Activated B cell treated with CpG ODN at 0.5 μM for 24 hours (primary cell): ENCODE measurements at regions of chr19 and their contacts with region 1.

Region 1: DNA sequence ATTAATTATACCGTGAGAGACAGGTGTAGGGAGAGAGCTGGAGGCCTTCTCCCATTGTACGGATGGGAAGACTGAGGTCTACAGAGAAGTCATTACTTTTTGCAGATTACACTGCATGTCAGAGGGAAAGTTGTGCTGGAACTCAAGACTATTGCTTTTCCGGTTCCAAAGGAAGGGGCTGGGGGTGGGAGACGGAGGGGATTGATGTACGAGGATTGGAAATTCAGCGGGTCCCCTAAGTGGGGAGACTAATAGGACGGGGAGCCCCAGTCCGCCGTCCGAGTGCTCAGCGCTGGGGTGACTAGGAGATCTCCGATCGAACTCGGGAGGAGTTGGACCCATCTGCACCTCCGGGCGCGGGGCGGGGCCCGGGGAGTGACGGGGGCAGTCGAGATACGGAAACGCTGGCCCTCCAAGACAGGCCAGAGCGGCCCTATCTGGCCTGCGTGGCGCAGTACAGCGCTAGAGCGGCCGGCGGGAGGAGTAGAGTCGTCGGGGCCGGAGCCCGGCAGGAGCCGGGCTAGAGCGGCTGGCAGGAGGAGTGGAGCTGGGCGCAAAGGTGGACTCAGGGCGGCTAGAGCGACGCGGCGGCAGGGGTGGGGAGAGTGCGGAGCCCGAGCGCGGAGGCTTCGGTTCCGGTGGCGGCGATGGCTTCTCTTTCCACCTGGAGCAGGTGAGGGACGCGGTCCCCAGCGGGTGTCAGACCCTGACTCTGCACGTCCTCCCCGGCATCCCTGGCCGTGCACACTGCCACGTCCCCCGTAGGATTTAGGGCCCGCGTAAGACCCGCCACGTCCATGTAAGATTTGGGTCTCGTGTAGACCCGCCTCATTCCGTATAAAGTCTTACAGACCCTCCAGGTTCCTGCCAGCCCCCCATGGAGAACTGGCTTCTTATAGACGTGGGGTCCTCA is 1.1 kb downstream of the ARHGEF1 start:
- DNase-seq: peak; percentile 86
- ATAC-seq: peak; percentile 82
- H3K4me3 Mint-ChIP-seq: peak overlapping the region; percentile 96
- H3K27ac Mint-ChIP-seq: peak overlapping the region; percentile 97
- H3K4me1 Mint-ChIP-seq: peaks cover 78% of the 10 kb centered on the region
- H3K27me3 Mint-ChIP-seq: no peaks in the 10 kb centered on the region
- CTCF ChIP-seq: no peak

Region 2: DNA sequence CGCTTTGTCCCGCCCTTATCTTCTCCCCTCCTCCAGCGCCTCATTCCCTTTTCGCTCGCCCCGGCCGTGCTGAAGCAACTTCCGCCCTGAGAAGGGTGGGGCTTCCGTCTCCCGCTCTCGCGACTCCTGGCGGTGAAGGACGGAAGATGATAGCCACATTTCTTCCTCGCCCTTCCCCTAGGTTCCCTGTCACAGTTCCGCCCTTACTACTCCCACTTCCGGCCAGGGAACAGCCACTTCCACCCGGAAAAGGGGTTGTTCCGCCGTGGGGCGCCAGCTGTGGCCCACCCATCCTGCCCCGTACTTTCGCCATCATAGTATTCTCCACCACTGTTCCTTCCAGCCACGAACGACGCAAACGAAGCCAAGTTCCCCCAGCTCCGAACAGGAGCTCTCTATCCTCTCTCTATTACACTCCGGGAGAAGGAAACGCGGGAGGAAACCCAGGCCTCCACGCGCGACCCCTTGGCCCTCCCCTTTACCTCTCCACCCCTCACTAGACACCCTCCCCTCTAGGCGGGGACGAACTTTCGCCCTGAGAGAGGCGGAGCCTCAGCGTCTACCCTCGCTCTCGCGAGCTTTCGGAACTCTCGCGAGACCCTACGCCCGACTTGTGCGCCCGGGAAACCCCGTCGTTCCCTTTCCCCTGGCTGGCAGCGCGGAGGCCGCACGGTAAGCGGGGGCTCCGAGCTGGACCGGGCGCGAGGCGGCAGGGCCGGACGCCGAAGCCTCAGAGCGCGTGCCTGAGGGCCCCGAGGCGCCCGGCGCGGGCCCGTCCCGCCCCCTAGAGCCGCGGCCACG is 24.3 kb before region 1 on chr19 and contains the start of gene RPS19:
- CTCF ChIA-PET with region 1: interaction called, 10 read pairs
- POLR2A ChIA-PET with region 1: interaction called, 118 read pairs
- intact Hi-C with region 1: loop called (anchors 1 kb)
- DNase-seq: peak; percentile 98
- ATAC-seq: peak; percentile 85
- H3K4me3 Mint-ChIP-seq: peak within 1 kb of the TSS; percentile 94
- H3K27ac Mint-ChIP-seq: peak within 1 kb of the TSS; percentile 97
- H3K4me1 Mint-ChIP-seq: peaks cover 44% of the 10 kb centered on the region
- H3K27me3 Mint-ChIP-seq: no peaks in the 10 kb centered on the region
- CTCF ChIP-seq: no peak
- total RNA-seq, gene RPS19: 4,196 and 4,853 TPM in 2 replicates

Region 3: GRCh38 chr19:41928221-41928683 is 44.2 kb after region 1 on chr19 and contains the start of gene ERFL:
- CTCF ChIA-PET with region 1: interaction called, 3 read pairs
- POLR2A ChIA-PET with region 1: interaction called, 7 read pairs
- intact Hi-C with region 1: loop called (anchors 1 kb)
- DNase-seq: no peak
- ATAC-seq: peak; percentile 35
- H3K4me3 Mint-ChIP-seq: no peak within 1 kb of the TSS
- H3K27ac Mint-ChIP-seq: peak within 1 kb of the TSS; percentile 73
- H3K4me1 Mint-ChIP-seq: peaks cover 35% of the 10 kb centered on the region
- H3K27me3 Mint-ChIP-seq: peaks cover 2% of the 10 kb centered on the region
- CTCF ChIP-seq: no peak
- total RNA-seq, gene ERFL: 0.64 and 1.1 TPM in 2 replicates

Region 4: GRCh38 chr19:41945135-41945766 is 61.2 kb after region 1 on chr19:
- CTCF ChIA-PET with region 1: interaction called, 7 read pairs
- POLR2A ChIA-PET with region 1: interaction called, 90 read pairs
- intact Hi-C with region 1: no loop called
- DNase-seq: peak; percentile 67
- ATAC-seq: peak; percentile 82
- H3K4me3 Mint-ChIP-seq: peak overlapping the region; percentile 72
- H3K27ac Mint-ChIP-seq: peak overlapping the region; percentile 98
- H3K4me1 Mint-ChIP-seq: peaks cover 73% of the 10 kb centered on the region
- H3K27me3 Mint-ChIP-seq: no peaks in the 10 kb centered on the region
- CTCF ChIP-seq: no peak

Region 5: DNA sequence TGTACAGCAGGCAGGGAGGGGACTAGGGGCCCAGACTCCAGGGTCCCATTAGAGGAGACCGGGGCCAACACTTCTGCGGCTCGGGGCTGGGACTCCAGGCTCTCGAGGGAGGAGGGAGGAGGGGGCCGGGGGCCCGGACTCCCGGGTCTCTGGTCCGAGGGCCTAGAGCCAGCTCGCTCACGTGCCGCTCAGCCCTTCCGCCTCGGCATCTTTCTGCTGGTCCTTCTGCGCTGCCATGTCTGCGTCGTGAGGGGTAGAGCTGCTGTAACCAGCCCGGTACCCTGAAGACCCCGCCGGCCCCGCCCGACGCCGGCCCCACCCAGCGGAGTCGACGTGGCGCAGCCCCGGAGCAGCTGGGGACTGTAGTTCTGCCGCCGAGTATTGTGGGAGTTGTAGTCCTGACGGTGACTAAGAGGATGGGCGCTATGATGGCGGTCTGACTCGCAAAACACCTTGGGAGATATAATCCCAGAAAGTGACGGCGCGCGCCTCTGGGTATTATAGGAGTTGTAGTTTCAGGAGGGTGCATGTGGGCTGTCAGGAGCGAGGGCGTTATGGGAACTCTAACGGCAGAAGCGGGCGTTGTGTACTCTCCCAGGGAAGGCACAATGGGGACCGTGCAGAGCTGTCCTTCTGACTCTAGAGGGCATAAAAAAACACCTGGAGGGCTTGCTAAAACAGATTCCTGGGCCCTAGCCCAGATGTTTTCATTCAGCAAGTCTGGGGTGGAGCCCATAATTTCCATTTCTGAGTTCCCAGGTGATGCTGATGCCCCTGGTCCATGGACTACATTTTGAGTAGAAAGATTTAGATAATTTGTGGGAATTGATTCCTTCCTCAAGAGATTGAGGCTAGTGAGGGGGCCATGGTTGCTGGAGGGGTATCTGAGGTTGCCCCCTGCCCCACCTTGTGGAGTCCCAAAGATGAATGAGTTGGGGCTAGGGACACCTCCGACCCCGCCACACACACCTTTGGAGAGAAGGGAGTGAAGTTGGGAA is 75.3 kb after region 1 on chr19 and contains the start of gene RABAC1:
- CTCF ChIA-PET with region 1: no interaction called
- POLR2A ChIA-PET with region 1: interaction called, 19 read pairs
- intact Hi-C with region 1: loop called (anchors 2 kb)
- DNase-seq: peak; percentile 79
- ATAC-seq: peak; percentile 91
- H3K4me3 Mint-ChIP-seq: peak within 1 kb of the TSS; percentile 90
- H3K27ac Mint-ChIP-seq: peak within 1 kb of the TSS; percentile 90
- H3K4me1 Mint-ChIP-seq: peaks cover 17% of the 10 kb centered on the region
- H3K27me3 Mint-ChIP-seq: no peaks in the 10 kb centered on the region
- CTCF ChIP-seq: no peak
- total RNA-seq, gene RABAC1: 96.7 and 102 TPM in 2 replicates